ENCODE measurements at regions of chr4 and their contacts with region 1.

Region 1: GRCh38 chr4:127965062-127965802 is at the starts of genes ABHD18 and MFSD8:
- DNase-seq: peak; percentile 100
- H3K4me3 Mint-ChIP-seq: peak within 1 kb of the TSS; percentile 90
- H3K27ac Mint-ChIP-seq: peak within 1 kb of the TSS; percentile 96
- H3K4me1 Mint-ChIP-seq: peaks cover 42% of the 10 kb centered on the region
- H3K27me3 Mint-ChIP-seq: no peaks in the 10 kb centered on the region
- total RNA-seq, gene ABHD18: 18.3 and 18.5 TPM in 2 replicates
- total RNA-seq, gene MFSD8: 18.7 and 21.1 TPM in 2 replicates

Region 2: DNA sequence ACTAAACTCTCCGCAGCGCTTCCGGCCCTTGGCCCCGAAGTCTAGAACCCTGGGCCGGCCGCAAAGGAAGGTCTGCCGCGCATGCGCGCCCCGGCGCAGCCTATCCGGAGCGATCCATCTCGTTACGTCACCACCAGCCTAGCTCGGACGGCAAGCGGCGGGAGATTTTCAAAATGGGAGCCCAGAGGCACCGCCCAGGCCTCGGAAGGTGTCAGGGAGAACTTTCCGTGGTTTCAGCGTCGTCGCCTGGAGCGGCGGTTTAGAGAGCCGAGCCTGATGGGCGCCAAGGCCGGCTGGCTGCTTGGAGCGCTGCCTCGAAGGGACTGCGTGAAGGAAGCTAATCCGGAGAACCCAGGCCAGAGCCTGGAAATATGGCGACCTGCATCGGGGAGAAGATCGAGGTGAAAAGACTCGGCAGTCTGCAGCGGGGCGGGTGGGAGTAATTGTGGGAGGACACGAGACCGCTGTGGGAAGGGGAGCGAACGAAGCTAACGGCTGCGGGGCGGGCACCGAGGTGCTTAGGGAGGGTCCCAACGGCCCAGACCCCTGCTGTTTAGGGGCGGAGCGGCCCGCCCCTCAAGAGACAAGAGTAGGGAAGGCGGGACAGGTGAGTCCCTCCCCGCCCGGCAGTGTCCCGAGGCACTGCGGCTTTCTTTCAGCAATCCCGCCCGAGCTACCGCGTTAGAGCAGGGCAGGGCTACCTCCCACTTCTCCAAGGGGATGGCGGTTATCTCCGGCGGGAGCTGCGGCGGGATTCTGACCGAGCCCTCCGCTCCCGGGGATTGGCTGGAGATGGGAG is 84.3 kb before region 1 on chr4 and contains the start of gene PLK4:
- intact Hi-C with region 1: loop called (anchors 1 kb)
- DNase-seq: peak; percentile 96
- H3K4me3 Mint-ChIP-seq: peak within 1 kb of the TSS; percentile 91
- H3K27ac Mint-ChIP-seq: peak within 1 kb of the TSS; percentile 91
- H3K4me1 Mint-ChIP-seq: peaks cover 31% of the 10 kb centered on the region
- H3K27me3 Mint-ChIP-seq: no peaks in the 10 kb centered on the region
- total RNA-seq, gene PLK4: 40.7 and 41.2 TPM in 2 replicates

Region 3: GRCh38 chr4:127997534-127998388 is 32.5 kb after region 1 on chr4:
- intact Hi-C with region 1: loop called (anchors 1 kb)
- DNase-seq: no peak
- H3K4me3 Mint-ChIP-seq: no peak overlapping the region
- H3K27ac Mint-ChIP-seq: peak overlapping the region; percentile 11
- H3K4me1 Mint-ChIP-seq: peaks cover 24% of the 10 kb centered on the region
- H3K27me3 Mint-ChIP-seq: no peaks in the 10 kb centered on the region

Region 4: GRCh38 chr4:128025319-128025718 is 60.1 kb after region 1 on chr4:
- intact Hi-C with region 1: no loop called
- DNase-seq: no peak
- H3K4me3 Mint-ChIP-seq: no peak overlapping the region
- H3K27ac Mint-ChIP-seq: no peak overlapping the region
- H3K4me1 Mint-ChIP-seq: no peaks in the 10 kb centered on the region
- H3K27me3 Mint-ChIP-seq: no peaks in the 10 kb centered on the region

Region 5: GRCh38 chr4:128863312-128864075 is 898.3 kb after region 1 on chr4:
- intact Hi-C with region 1: loop called (anchors 10 kb)
- DNase-seq: peak; percentile 34
- H3K4me3 Mint-ChIP-seq: peak overlapping the region; percentile 27
- H3K27ac Mint-ChIP-seq: peak overlapping the region; percentile 87
- H3K4me1 Mint-ChIP-seq: peaks cover 53% of the 10 kb centered on the region
- H3K27me3 Mint-ChIP-seq: no peaks in the 10 kb centered on the region

Measured in activated T-helper 1 cell treated with anti-CD3 and anti-CD28 coated beads, Interleukin-12 subunit alpha, Interleukin-12 subunit beta, Interleukin-2, Interleukin-4 antibody, amounts not matched to agents 30 ng/mL and 10 ng/mL and 1 ng/mL, durations not matched to agents 14 hours and 24 hours and 36 hours (primary cell).